GM10248 (cell line): ENCODE measurements at regions of chr4 and their contacts with region 1.

Region 1: GRCh38 chr4:109702950-109703663 is at the start of gene CASP6:
- DNase-seq: peak; percentile 86
- CTCF ChIP-seq: peak; percentile 63

Region 2: DNA sequence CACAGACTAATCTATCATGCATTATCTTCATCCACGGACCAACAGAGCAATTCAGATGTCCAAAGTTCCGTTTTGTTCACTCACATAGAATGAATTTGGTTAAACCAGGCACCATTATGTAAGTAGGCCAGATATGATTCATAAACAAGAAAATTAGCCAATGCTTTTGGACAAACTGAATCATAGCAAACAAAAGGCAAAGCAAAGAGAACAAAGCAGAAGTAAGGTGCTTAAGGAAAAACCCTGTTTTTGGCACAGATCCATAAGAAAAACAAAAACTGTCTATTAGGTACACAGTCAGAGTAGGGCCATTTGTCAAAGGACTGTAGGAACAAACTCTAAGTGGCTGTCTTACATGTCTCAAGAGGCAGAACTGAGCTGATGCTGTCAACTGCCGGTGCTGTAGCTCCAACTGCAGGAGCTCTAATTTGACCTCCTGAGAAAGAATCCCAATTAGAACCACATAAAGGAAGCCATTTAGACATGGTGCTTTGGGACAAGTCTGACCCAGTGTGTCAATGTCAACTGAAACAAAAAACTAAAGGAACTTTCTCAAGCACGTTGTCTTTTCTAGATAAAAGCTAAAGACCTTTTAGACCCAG is 547.3 kb before region 1 on chr4:
- CTCF ChIA-PET with region 1: no interaction called
- POLR2A ChIA-PET with region 1: no interaction called
- DNase-seq: no peak
- CTCF ChIP-seq: no peak

Region 3: GRCh38 chr4:109462297-109462696 is 240.8 kb before region 1 on chr4:
- CTCF ChIA-PET with region 1: no interaction called
- POLR2A ChIA-PET with region 1: no interaction called
- DNase-seq: no peak
- CTCF ChIP-seq: no peak

Region 4: GRCh38 chr4:109718759-109719158 is 15.7 kb after region 1 on chr4:
- CTCF ChIA-PET with region 1: interaction called, 14 read pairs
- POLR2A ChIA-PET with region 1: no interaction called
- DNase-seq: no peak
- CTCF ChIP-seq: no peak

Region 5: DNA sequence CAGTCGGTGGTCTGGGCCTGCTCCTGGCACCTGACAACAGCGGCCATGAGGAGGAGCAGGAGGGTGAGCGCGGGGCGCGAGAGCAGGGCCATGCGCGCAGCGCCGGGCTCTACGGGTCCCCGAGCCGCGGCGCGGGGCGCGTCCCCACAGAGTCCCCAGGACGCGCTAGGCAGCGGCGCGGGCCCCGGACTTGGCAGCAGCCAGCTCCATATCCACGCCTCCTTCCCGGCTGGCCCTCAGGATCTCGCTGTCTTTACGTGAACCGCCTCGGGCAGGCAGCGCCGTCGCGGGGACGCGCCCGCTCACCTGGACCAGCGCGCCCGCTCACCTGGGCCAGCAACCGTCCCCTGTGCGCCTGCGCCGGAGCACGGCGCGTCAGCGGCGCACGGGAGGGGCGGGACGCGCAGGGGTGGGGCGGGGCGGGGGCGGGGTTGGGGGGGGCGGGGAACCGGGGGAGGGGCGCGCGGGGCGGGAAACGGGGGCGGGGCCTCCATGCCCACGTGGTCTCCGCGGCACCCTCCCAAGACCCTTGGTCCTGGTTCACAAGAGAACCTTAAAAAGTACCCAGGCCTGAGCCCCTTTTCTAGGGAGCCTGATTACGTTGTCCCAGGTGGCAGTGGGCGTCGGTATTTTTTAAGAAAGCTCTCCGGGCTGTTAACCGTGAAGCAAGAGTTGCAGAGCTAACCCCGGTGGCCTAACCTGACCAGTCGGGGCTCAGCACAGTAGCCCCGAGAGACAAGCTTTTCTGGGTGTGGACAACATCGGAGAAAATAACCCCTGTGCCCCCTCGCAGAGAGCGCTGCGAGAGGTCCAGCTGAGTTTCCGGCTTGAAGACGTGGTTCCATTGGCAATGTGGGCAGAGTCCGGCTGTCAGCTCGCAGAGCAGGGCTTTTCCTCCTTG is 26.9 kb after region 1 on chr4 and contains the start of gene PLA2G12A:
- CTCF ChIA-PET with region 1: interaction called, 16 read pairs
- POLR2A ChIA-PET with region 1: no interaction called
- DNase-seq: peak; percentile 93
- CTCF ChIP-seq: no peak

Region 6: DNA sequence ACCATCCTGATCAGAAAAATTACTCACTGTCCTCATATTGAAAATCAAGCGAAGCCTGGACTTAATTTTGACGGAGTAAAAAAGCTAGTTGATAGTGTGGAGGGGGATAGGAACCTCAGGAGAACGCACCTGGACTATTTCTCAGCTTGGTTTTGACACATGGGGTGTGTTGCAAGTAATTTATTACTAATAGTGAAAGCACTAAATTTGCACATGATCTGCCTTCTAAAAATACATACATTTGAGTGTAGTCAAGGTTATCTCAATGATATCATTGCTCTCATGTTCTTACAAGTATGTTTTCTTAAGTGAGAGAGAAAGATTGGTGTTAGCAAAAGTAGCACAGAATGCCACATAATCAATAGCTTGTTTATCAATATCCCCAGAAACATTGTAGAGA is 174.3 kb after region 1 on chr4:
- CTCF ChIA-PET with region 1: no interaction called
- POLR2A ChIA-PET with region 1: no interaction called
- DNase-seq: peak; percentile 25
- CTCF ChIP-seq: no peak